ENCODE measurements at regions of chr14 and their contacts with region 1.

Region 1: GRCh38 chr14:90256354-90257131 is at the start of gene PSMC1:
- DNase-seq: peak; percentile 82 to 90
- ATAC-seq: peak; percentile 94 to 99 (median 95)
- H3K4me3 ChIP-seq: peak within 1 kb of the TSS; percentile 89
- H3K4me3 Mint-ChIP-seq: peak within 1 kb of the TSS; percentile 99
- H3K27ac ChIP-seq: peak within 1 kb of the TSS; percentile 71
- H3K27ac Mint-ChIP-seq: peak within 1 kb of the TSS; percentile 94 to 98
- H3K4me1 ChIP-seq: peaks cover 6% of the 10 kb centered on the region
- H3K4me1 Mint-ChIP-seq: peaks cover 32 to 33% of the 10 kb centered on the region in 2 donors
- H3K27me3 ChIP-seq: peaks cover 2% of the 10 kb centered on the region
- H3K27me3 Mint-ChIP-seq: peaks cover 14 to 17% of the 10 kb centered on the region in 2 donors
- CTCF ChIP-seq: no peak
- total RNA-seq, gene PSMC1: 84.1 to 97.1 (median 93.1) TPM

Region 2: DNA sequence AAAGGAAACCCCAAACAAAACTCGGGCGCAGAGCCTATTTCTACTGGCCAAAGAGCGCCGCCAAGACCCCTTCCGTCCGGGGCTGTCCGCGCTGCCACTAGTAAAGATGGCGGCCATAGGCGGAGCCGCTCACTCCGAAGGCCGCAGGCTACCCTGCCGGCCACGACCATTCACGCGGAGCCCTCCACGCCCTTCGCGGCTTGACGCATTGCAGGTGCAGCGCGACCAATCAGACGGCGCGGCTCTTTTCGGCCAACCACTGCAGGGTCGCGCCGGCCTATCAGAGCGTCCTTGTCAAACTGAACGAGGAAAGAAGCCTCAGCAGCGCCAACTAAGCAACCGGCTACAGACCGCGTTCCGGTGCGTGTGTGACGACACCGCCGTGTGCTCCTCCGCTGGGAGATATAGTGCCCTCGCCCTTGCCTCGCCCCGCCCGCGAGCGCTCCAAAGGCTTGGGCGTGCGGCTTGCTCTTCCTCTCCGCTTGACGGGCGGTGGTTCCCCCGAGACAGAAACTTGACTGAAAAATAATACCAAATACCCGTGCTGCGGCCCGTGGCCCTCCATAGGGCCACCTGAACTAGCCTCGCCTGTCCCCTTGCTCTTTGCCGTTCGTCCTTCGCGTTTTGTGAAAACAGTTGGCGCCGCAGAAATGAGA is 126.7 kb after region 1 on chr14:
- intact Hi-C with region 1: loop called (anchors 2 kb)
- DNase-seq: peak; percentile 96 to 98
- ATAC-seq: peak; percentile 84 to 94 (median 88)
- H3K4me3 ChIP-seq: peak overlapping the region; percentile 80
- H3K4me3 Mint-ChIP-seq: no peak overlapping the region
- H3K27ac ChIP-seq: peak overlapping the region; percentile 96
- H3K27ac Mint-ChIP-seq: no peak overlapping the region
- H3K4me1 ChIP-seq: peaks cover 25% of the 10 kb centered on the region
- H3K4me1 Mint-ChIP-seq: no peaks in the 10 kb centered on the region
- H3K27me3 ChIP-seq: no peaks in the 10 kb centered on the region
- H3K27me3 Mint-ChIP-seq: no peaks in the 10 kb centered on the region
- CTCF ChIP-seq: no peak

Region 3: DNA sequence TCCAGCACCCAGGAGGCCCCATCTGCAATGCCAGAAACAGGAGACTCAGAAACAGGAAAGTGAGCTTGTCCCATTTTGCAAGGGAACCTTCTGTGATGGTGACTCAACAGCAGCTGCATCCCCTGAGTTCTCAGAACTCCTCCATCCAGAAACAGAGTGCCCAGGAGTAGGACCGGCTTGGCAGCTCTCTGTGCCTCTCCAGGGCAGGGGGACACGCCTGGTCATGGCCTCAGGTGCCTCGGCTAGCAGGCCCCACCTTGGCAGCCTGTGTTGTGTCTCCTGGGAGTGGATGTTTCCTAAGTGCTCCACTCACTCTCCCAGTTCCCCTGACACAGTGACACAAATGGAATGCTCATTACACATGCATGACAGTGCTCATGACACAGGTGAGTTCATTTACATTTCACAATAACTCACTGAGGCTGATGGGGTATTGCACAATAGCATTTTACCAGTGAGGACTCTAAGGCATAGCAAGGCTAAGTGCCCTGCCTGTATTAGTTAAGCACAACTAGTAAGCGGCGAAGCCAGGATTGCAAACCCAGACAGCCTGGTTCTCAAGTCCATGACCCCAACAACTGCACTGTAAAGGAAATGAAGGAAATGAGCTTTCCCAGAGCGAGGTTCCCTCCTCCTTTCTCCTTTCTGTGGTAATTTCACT is 187.6 kb after region 1 on chr14:
- intact Hi-C with region 1: no loop called
- DNase-seq: no peak
- ATAC-seq: no peak
- H3K4me3 ChIP-seq: no peak overlapping the region
- H3K4me3 Mint-ChIP-seq: no peak overlapping the region
- H3K27ac ChIP-seq: no peak overlapping the region
- H3K27ac Mint-ChIP-seq: no peak overlapping the region
- H3K4me1 ChIP-seq: no peaks in the 10 kb centered on the region
- H3K4me1 Mint-ChIP-seq: no peaks in the 10 kb centered on the region
- H3K27me3 ChIP-seq: no peaks in the 10 kb centered on the region
- H3K27me3 Mint-ChIP-seq: peaks cover 10 to 12% of the 10 kb centered on the region in 2 donors
- CTCF ChIP-seq: no peak

Region 4: GRCh38 chr14:90924621-90925345 is 668.2 kb after region 1 on chr14:
- intact Hi-C with region 1: no loop called
- DNase-seq: no peak
- ATAC-seq: no peak
- H3K4me3 ChIP-seq: no peak overlapping the region
- H3K4me3 Mint-ChIP-seq: no peak overlapping the region
- H3K27ac ChIP-seq: no peak overlapping the region
- H3K27ac Mint-ChIP-seq: no peak overlapping the region
- H3K4me1 ChIP-seq: no peaks in the 10 kb centered on the region
- H3K4me1 Mint-ChIP-seq: no peaks in the 10 kb centered on the region
- H3K27me3 ChIP-seq: no peaks in the 10 kb centered on the region
- H3K27me3 Mint-ChIP-seq: no peaks in the 10 kb centered on the region
- CTCF ChIP-seq: no peak

Measured in natural killer cell (primary cell).